ENCODE measurements at regions of chrX and their contacts with region 1.

Region 1: GRCh38 chrX:12138361-12139313 is at the start of gene FRMPD4:
- DNase-seq: no peak
- ATAC-seq: no peak
- H3K4me3 ChIP-seq: peak within 1 kb of the TSS; percentile 11 to 40; a peak in 2 of 4 replicates
- H3K27ac ChIP-seq: no peak within 1 kb of the TSS
- H3K4me1 ChIP-seq: no peaks in the 10 kb centered on the region
- H3K27me3 ChIP-seq: no peaks in the 10 kb centered on the region
- CTCF ChIP-seq: no peak
- total RNA-seq, gene FRMPD4: not detected

Region 2: DNA sequence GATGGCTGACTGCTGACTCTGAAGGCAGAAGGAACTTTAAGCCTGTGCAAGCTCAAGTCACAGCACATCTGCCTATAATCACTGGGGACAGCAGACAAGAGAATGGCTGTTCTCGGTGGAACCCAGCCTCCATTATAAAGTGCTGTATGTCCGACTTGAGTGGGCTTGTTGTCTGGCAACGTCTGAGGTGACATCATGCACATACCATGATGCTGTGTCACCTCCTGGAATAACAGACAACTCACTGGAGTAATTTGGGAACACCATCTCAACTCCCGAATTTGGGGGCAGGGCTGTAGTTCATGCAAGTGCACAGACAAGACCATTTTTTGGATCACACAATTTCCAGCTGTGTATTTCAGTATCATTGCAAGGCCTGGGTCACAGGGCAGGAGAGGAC is 1738.0 kb after region 1 on chrX:
- CTCF ChIA-PET with region 1: no interaction called
- POLR2A ChIA-PET with region 1: no interaction called
- in situ Hi-C with region 1: no loop called
- intact Hi-C with region 1: loop called (anchors 10 kb)
- DNase-seq: no peak
- ATAC-seq: no peak
- H3K4me3 ChIP-seq: no peak overlapping the region
- H3K27ac ChIP-seq: no peak overlapping the region
- H3K4me1 ChIP-seq: no peaks in the 10 kb centered on the region
- H3K27me3 ChIP-seq: no peaks in the 10 kb centered on the region
- CTCF ChIP-seq: no peak